Heart left ventricle (tissue), 16 donors: ENCODE measurements at regions of chr15 and their contacts with region 1.

Region 1: DNA sequence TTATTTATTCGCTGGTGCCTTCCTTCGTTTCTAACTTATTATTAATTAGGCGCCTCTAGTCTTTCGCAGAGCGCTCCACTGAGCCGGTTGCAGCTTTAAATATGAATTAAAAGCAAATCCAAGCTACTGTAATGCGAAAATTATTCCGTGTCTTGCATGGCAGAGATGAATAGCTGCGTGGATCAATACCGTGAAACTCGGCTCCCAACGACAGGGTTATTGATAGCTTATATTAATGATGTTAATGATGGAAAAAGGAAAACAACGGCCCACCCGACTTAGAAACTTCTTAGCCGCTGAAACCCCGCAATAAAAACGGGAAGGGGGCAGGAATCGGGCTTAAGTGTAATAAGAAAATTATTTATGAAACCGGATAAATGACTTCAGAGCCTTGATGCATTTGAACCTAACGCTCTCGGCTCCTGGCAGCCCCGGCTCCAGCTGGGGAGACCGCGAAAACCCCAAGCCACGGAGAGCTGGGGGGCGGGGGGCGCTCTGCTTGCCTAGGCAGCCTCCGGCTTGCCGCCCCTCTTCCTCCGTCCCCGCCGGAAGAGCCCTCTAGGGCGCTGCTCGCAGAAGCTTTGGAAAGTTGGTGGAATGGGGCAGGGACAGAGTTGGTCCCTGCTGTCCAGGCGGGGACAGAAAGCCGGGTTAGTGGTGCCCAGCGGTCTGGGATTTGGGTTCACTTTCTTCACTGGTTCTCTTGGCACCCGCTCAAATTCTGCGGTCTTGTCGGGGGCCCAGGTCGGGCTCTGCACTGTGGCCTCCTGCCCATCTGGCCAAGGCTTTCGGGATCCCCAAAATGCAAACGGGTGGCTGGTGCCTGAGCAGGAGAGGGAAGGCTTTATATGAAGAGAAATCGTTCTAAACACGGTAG is 7.7 kb upstream of the ONECUT1 start:
- DNase-seq: no peak
- ATAC-seq: no peak
- H3K4me3 ChIP-seq: no peak overlapping the region
- H3K27ac ChIP-seq: no peak overlapping the region
- H3K4me1 ChIP-seq: peaks cover 0 to 25% (median 6%) of the 10 kb centered on the region in 12 donors
- H3K27me3 ChIP-seq: peaks cover 64 to 98% (median 95%) of the 10 kb centered on the region in 9 donors
- CTCF ChIP-seq: no peak
- POLR2A ChIP-seq: no peak

Region 2: DNA sequence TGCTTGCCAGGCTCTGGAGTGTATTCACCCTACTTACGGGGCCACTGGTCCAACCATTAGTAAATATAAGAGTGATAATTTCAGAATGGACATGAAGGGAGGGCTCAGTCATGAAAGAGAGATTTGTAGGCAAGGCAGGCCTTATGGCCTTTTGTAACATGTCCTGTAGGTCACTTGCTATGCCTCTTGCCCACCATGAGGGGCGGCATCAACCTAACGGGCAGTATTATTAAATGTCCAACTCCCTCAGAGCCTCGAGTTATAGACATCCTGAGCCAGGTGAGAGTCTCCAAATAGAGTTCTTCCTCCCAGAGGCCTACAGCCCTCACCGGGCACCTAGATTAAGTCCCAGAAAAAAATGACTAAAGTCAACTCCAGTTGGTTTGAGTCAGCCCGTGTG is 37.9 kb before region 1 on chr15:
- intact Hi-C with region 1: loop called in 1 of 10 experiments (anchors 2 kb)
- DNase-seq: no peak
- ATAC-seq: no peak
- H3K4me3 ChIP-seq: no peak overlapping the region
- H3K27ac ChIP-seq: no peak overlapping the region
- H3K4me1 ChIP-seq: no peaks in the 10 kb centered on the region
- H3K27me3 ChIP-seq: peaks cover 0 to 18% (median 0%) of the 10 kb centered on the region in 9 donors
- CTCF ChIP-seq: no peak
- POLR2A ChIP-seq: no peak